CD8-positive, alpha-beta memory T cell (primary cell): ENCODE measurements at regions of chr22 and their contacts with region 1.

Region 1: GRCh38 chr22:39532215-39533071 is at the start of gene RPS19BP1:
- DNase-seq: peak; percentile 98 to 100 (median 99)
- H3K4me3 ChIP-seq: peak within 1 kb of the TSS; percentile 92
- H3K4me3 Mint-ChIP-seq: peak within 1 kb of the TSS; percentile 87 to 97 (median 93)
- H3K27ac ChIP-seq: peak within 1 kb of the TSS; percentile 91
- H3K27ac Mint-ChIP-seq: peak within 1 kb of the TSS; percentile 87 to 99 (median 94)
- H3K4me1 ChIP-seq: peaks cover 57% of the 10 kb centered on the region
- H3K4me1 Mint-ChIP-seq: peaks cover 47 to 63% (median 62%) of the 10 kb centered on the region in 3 donors
- H3K27me3 ChIP-seq: no peaks in the 10 kb centered on the region
- H3K27me3 Mint-ChIP-seq: no peaks in the 10 kb centered on the region
- total RNA-seq, gene RPS19BP1: 158 to 160 TPM

Region 2: GRCh38 chr22:39170825-39171622 is 361.4 kb before region 1 on chr22:
- CTCF ChIA-PET with region 1: interaction called, 10 read pairs
- POLR2A ChIA-PET with region 1: no interaction called
- DNase-seq: peak; percentile 76 to 86 (median 81)
- H3K4me3 ChIP-seq: peak overlapping the region; percentile 64
- H3K4me3 Mint-ChIP-seq: peak overlapping the region; percentile 44 to 79 (median 74)
- H3K27ac ChIP-seq: peak overlapping the region; percentile 61
- H3K27ac Mint-ChIP-seq: peak overlapping the region; percentile 94 to 99 (median 96)
- H3K4me1 ChIP-seq: peaks cover 53% of the 10 kb centered on the region
- H3K4me1 Mint-ChIP-seq: peaks cover 45 to 54% (median 51%) of the 10 kb centered on the region in 3 donors
- H3K27me3 ChIP-seq: no peaks in the 10 kb centered on the region
- H3K27me3 Mint-ChIP-seq: peaks cover 0 to 5% of the 10 kb centered on the region in 2 donors

Region 3: DNA sequence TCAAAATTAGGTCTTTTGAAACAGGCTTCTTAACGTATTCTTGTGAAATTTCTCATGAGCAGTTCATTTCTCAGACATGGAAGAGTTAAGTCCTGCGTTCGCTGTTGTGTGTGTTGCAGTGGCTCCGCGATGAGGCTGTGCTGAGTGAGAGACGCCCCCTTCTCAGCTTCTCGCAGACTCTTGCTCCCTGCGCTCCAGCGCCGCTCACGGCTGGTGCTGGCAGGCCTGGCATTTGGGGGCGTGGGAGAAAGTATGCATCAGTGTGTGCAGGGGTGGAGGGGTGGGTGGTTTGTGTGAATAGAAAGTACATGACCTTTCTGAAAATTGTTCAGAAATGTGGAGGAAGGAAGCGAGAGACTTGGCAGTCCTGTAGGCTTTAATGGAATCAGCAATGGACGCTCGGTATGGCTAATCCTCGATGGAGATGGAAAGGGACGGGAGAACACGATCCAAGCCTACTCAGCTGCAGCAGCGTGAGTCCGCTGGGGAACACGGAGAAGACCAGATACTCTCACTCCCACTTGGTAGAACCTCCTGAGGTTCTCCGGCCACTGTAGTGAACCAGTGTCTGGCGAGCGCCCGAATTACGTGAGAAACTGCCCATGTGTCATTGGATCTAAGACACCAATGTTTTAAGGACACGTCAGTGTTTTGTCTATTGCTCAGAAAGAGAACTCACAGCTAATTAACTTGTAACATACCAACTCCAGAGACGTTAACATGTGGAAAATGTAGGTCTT is 126.9 kb before region 1 on chr22:
- CTCF ChIA-PET with region 1: interaction called, 17 read pairs
- POLR2A ChIA-PET with region 1: no interaction called
- DNase-seq: no peak
- H3K4me3 ChIP-seq: no peak overlapping the region
- H3K4me3 Mint-ChIP-seq: peak overlapping the region in 1 of 7 donors; percentile 78
- H3K27ac ChIP-seq: no peak overlapping the region
- H3K27ac Mint-ChIP-seq: peak overlapping the region in 1 of 8 donors; percentile 21
- H3K4me1 ChIP-seq: peaks cover 15% of the 10 kb centered on the region
- H3K4me1 Mint-ChIP-seq: peaks cover 30 to 70% (median 62%) of the 10 kb centered on the region in 3 donors
- H3K27me3 ChIP-seq: no peaks in the 10 kb centered on the region
- H3K27me3 Mint-ChIP-seq: no peaks in the 10 kb centered on the region

Region 4: DNA sequence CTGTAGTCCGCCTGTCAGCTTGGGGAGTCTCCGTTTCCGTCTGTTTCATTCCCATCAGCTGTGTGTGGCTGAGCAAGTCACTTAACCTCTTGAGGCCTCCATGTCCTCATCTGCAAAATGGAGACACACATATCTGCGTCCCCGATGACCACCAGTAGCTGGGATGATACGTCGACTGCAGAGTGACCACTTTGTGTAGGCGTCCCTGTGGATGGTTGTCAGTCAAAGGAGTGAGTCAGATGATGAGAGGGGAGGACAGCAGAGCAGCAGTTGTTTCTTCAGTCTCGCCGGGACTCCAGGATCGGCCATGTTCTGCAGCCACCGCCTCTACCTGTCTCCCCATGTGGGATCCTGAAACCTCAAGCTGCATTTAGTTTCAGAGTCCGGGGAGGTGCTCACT is 55.8 kb before region 1 on chr22:
- CTCF ChIA-PET with region 1: no interaction called
- POLR2A ChIA-PET with region 1: no interaction called
- DNase-seq: no peak
- H3K4me3 ChIP-seq: no peak overlapping the region
- H3K4me3 Mint-ChIP-seq: no peak overlapping the region
- H3K27ac ChIP-seq: no peak overlapping the region
- H3K27ac Mint-ChIP-seq: no peak overlapping the region
- H3K4me1 ChIP-seq: peaks cover 10% of the 10 kb centered on the region
- H3K4me1 Mint-ChIP-seq: peaks cover 3 to 13% (median 8%) of the 10 kb centered on the region in 3 donors
- H3K27me3 ChIP-seq: no peaks in the 10 kb centered on the region
- H3K27me3 Mint-ChIP-seq: peaks cover 0 to 1% of the 10 kb centered on the region in 2 donors

Region 5: GRCh38 chr22:39502109-39502788 is 30.2 kb before region 1 on chr22 and contains the start of gene MIEF1:
- CTCF ChIA-PET with region 1: interaction called, 52 read pairs
- POLR2A ChIA-PET with region 1: interaction called, 9 read pairs
- DNase-seq: peak; percentile 80 to 92 (median 83)
- H3K4me3 ChIP-seq: peak within 1 kb of the TSS; percentile 70
- H3K4me3 Mint-ChIP-seq: peak within 1 kb of the TSS; percentile 91 to 98 (median 97)
- H3K27ac ChIP-seq: peak within 1 kb of the TSS; percentile 71
- H3K27ac Mint-ChIP-seq: peak within 1 kb of the TSS; percentile 78 to 99 (median 95)
- H3K4me1 ChIP-seq: peaks cover 24% of the 10 kb centered on the region
- H3K4me1 Mint-ChIP-seq: peaks cover 39 to 48% (median 45%) of the 10 kb centered on the region in 3 donors
- H3K27me3 ChIP-seq: no peaks in the 10 kb centered on the region
- H3K27me3 Mint-ChIP-seq: peaks cover 0 to 2% of the 10 kb centered on the region in 2 donors
- total RNA-seq, gene MIEF1: 59.9 to 60.9 TPM

Region 6: GRCh38 chr22:39545386-39546365 is 13.2 kb after region 1 on chr22:
- CTCF ChIA-PET with region 1: interaction called, 14 read pairs
- POLR2A ChIA-PET with region 1: no interaction called
- DNase-seq: peak; percentile 48 to 73 (median 51)
- H3K4me3 ChIP-seq: peak overlapping the region; percentile 27
- H3K4me3 Mint-ChIP-seq: peak overlapping the region; percentile 11 to 87 (median 75)
- H3K27ac ChIP-seq: no peak overlapping the region
- H3K27ac Mint-ChIP-seq: peak overlapping the region in 3 of 8 donors; percentile 16 to 65 (median 37)
- H3K4me1 ChIP-seq: peaks cover 24% of the 10 kb centered on the region
- H3K4me1 Mint-ChIP-seq: peaks cover 20 to 29% (median 26%) of the 10 kb centered on the region in 3 donors
- H3K27me3 ChIP-seq: no peaks in the 10 kb centered on the region
- H3K27me3 Mint-ChIP-seq: peaks cover 33 to 47% of the 10 kb centered on the region in 2 donors

Region 7: GRCh38 chr22:40024201-40025061 is 492.0 kb after region 1 on chr22:
- CTCF ChIA-PET with region 1: interaction called, 60 read pairs
- POLR2A ChIA-PET with region 1: no interaction called
- DNase-seq: peak; percentile 36 to 73 (median 47)
- H3K4me3 ChIP-seq: no peak overlapping the region
- H3K4me3 Mint-ChIP-seq: no peak overlapping the region
- H3K27ac ChIP-seq: no peak overlapping the region
- H3K27ac Mint-ChIP-seq: no peak overlapping the region
- H3K4me1 ChIP-seq: peaks cover 6% of the 10 kb centered on the region
- H3K4me1 Mint-ChIP-seq: peaks cover 0 to 4% (median 4%) of the 10 kb centered on the region in 3 donors
- H3K27me3 ChIP-seq: no peaks in the 10 kb centered on the region
- H3K27me3 Mint-ChIP-seq: no peaks in the 10 kb centered on the region